ENCODE measurements at regions of chr3 and their contacts with region 1.

Region 1: DNA sequence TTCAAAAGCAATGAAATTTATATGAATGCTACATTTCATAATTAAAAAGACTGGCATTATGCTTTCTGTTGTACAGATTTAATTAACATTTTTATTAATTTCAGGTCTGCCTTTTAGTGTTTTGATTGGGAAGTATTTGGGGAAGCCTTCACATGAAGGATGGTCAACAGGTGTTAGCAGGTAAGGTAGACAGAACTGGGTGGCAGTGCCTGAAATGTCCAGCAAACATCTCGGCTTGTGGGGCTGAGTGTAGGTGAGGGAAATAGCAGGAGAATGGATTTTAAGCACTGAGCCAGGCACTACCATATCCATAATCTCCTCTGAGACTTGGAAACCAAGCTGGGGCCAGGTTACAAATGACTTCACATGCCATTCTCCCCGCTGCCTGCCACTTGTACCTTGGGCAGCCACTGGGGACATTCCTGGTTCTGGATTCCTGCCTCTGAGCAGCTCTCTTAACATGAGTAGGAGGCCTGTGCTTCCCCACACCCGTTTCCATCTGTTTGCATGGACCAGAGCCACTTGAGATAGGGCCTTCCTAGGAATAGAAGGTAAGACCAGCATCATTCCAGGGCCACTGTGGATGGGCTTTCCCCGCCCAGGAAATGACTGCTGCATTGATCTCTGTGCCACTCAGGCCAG is 125.9 kb upstream of the HES1 start:
- DNase-seq: no peak
- H3K4me3 ChIP-seq: no peak overlapping the region
- H3K27ac ChIP-seq: no peak overlapping the region
- H3K4me1 ChIP-seq: peaks cover 0 to 1% (median 0%) of the 10 kb centered on the region in 4 donors
- H3K27me3 ChIP-seq: peaks cover 0 to 58% of the 10 kb centered on the region in 2 donors
- CTCF ChIP-seq: no peak

Region 2: GRCh38 chr3:194070634-194071409 is 60.8 kb after region 1 on chr3:
- intact Hi-C with region 1: loop called (anchors 5 kb)
- DNase-seq: peak; percentile 65 to 93
- H3K4me3 ChIP-seq: peak overlapping the region; percentile 53 to 59
- H3K27ac ChIP-seq: peak overlapping the region; percentile 69 to 74
- H3K4me1 ChIP-seq: peaks cover 0 to 21% (median 14%) of the 10 kb centered on the region in 4 donors
- H3K27me3 ChIP-seq: no peaks in the 10 kb centered on the region
- CTCF ChIP-seq: no peak